ENCODE measurements at regions of chr7 and their contacts with region 1.

Region 1: DNA sequence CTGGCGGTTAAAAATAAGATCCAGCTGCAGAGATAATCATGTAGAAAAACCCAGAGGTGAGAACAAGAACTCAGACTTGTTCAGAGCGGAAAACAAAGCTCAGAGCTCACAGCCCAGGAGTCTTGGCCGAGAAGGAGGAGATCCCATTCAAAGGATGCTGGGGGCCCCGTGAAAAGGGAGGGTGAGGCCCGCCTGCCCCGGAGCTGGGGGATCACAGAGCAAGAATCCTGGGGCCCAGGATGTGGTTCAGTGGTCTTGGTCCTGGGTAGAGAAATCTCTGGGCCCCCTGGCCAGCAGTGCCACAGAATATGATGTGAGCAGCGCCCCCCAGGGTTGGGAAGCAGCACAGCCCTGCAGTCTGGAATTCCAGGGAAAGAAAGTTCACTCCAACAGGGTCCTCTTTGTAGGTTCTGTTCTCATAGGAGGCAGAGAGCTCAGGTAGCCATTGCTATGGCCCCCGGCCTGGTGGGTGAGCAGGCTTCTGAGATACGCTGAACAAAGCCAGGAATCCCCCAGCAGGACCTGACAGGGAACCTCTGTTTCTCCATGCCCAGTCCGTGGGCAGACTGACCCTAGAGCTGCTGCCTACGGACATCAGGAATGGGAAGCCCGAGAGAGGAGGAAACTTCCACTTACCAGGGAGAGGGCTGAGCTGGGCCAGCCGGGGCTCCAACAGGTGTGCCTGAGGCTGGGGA is 77.7 kb upstream of the GNA12 start:
- DNase-seq: peak; percentile 69
- ATAC-seq: peak; percentile 81
- H3K4me3 Mint-ChIP-seq: no peak overlapping the region
- H3K27ac Mint-ChIP-seq: peak overlapping the region; percentile 45
- H3K4me1 Mint-ChIP-seq: no peaks in the 10 kb centered on the region
- H3K27me3 Mint-ChIP-seq: no peaks in the 10 kb centered on the region
- CTCF ChIP-seq: peak; percentile 68

Region 2: GRCh38 chr7:2734751-2735571 is 186.8 kb before region 1 on chr7:
- CTCF ChIA-PET with region 1: no interaction called
- POLR2A ChIA-PET with region 1: no interaction called
- DNase-seq: peak; percentile 16
- ATAC-seq: no peak
- H3K4me3 Mint-ChIP-seq: no peak overlapping the region
- H3K27ac Mint-ChIP-seq: peak overlapping the region; percentile 83
- H3K4me1 Mint-ChIP-seq: peaks cover 37% of the 10 kb centered on the region
- H3K27me3 Mint-ChIP-seq: no peaks in the 10 kb centered on the region
- CTCF ChIP-seq: no peak

Region 3: DNA sequence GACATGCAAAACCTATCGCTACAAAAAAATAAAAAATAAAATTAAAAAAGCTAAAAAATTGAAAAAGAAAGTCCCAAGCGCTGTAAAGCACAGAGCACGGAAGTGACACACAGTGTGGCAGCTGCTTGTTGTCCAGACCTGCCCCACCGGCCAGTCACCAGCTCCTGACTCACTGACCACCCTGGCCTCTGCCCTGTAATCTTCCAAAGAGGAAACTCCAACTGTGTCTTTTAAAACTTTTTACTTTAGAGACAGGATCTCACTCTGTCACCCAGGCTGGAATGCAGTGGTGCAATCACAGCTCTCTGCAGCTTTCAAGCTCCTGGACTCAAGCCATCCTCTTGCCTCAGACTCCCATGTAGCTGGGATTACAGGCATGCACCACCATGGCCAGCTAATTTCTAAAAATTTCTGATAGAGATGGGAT is 101.3 kb before region 1 on chr7:
- CTCF ChIA-PET with region 1: no interaction called
- POLR2A ChIA-PET with region 1: no interaction called
- DNase-seq: no peak
- ATAC-seq: no peak
- H3K4me3 Mint-ChIP-seq: no peak overlapping the region; the same call in 1 of the 2 replicates
- H3K27ac Mint-ChIP-seq: peak overlapping the region; percentile 100
- H3K4me1 Mint-ChIP-seq: peaks cover 96% of the 10 kb centered on the region
- H3K27me3 Mint-ChIP-seq: no peaks in the 10 kb centered on the region
- CTCF ChIP-seq: no peak

Region 4: GRCh38 chr7:2863461-2864066 is 58.2 kb before region 1 on chr7:
- CTCF ChIA-PET with region 1: interaction called, 23 read pairs
- POLR2A ChIA-PET with region 1: no interaction called
- DNase-seq: peak; percentile 32
- ATAC-seq: peak; percentile 68
- H3K4me3 Mint-ChIP-seq: no peak overlapping the region
- H3K27ac Mint-ChIP-seq: peak overlapping the region; percentile 87
- H3K4me1 Mint-ChIP-seq: peaks cover 24% of the 10 kb centered on the region
- H3K27me3 Mint-ChIP-seq: no peaks in the 10 kb centered on the region
- CTCF ChIP-seq: no peak

Region 5: DNA sequence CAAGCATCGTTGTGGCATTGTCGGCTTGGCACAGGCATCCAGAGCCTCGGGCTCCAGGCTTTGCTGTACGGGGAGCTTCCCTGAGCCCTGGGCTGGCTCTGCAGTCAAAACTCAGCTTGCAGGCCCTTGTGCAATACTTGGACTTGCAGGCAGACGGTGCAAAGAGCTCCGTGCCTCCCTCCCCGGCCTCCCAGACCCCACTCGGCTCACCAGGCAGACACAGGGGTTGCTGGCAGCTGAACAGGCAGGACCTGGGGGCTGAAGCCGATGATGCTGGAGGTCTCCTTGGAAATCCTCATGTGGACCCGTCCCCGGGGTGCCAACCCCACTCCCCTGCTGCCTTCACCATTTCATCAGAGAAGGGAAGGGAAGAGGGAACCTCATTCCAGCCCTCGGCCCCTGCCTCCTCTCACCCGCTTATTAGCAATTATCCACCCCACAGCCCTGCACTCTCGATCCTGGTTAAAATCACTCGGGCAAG is 18.1 kb before region 1 on chr7:
- CTCF ChIA-PET with region 1: interaction called, 11 read pairs
- POLR2A ChIA-PET with region 1: no interaction called
- DNase-seq: no peak
- ATAC-seq: no peak
- H3K4me3 Mint-ChIP-seq: no peak overlapping the region
- H3K27ac Mint-ChIP-seq: no peak overlapping the region
- H3K4me1 Mint-ChIP-seq: no peaks in the 10 kb centered on the region
- H3K27me3 Mint-ChIP-seq: no peaks in the 10 kb centered on the region
- CTCF ChIP-seq: no peak